ENCODE measurements at regions of chr5 and their contacts with region 1.

Region 1: GRCh38 chr5:139262742-139263445 is 30.6 kb upstream of the MATR3 start:
- DNase-seq: peak; percentile 94
- H3K4me3 ChIP-seq: no peak overlapping the region
- H3K27ac ChIP-seq: no peak overlapping the region
- H3K4me1 ChIP-seq: no peaks in the 10 kb centered on the region
- H3K27me3 ChIP-seq: no peaks in the 10 kb centered on the region
- CTCF ChIP-seq: peak; percentile 92

Region 2: DNA sequence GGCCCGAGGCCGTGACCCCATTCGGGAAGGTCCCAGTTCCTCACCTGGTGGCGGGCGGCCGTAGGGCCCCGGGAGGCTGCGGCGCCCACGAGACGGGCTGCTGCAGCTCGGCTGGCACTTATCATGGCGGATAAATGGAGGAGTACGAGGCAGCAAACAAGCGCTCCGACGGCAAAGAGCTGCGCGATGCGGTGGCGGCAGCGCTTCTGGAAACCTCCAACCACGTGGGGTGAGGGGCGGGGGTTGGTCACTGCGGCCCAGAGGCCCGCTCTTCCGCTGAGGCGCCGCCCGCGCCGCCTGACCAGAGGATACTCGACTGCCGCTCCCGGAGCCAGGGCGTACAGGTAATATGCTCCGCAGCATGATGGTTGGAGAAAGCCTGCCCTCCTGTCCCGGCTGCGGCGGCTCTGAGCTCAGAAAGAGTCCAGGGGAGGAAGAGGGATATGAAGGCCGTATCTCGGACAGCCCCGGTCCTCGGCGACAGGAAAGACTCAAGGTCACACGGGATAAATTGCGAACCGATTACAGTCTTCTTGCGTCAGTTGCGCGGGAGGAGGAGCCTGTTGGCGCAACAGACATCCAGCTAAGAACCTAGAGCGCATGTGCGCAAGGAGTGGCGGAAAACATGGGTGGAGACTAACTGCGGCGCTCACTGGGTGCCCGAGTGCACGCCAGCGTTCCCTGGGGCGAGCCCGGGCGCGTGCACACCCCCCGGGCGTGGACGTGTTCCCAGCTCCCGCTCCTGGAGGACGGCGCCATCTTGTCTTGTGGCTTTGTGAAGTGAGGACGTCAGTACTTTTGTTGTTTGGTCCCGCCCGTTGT is 687.5 kb before region 1 on chr5 and contains the start of gene HSPA9:
- CTCF ChIA-PET with region 1: interaction called, 11 read pairs
- POLR2A ChIA-PET with region 1: no interaction called
- intact Hi-C with region 1: loop called (anchors 1 kb)
- DNase-seq: peak; percentile 99
- H3K4me3 ChIP-seq: peak within 1 kb of the TSS; percentile 84
- H3K27ac ChIP-seq: peak within 1 kb of the TSS; percentile 100
- H3K4me1 ChIP-seq: peaks cover 17% of the 10 kb centered on the region
- H3K27me3 ChIP-seq: no peaks in the 10 kb centered on the region
- CTCF ChIP-seq: no peak
- total RNA-seq, gene HSPA9: 502 TPM in 2 replicates

Region 3: DNA sequence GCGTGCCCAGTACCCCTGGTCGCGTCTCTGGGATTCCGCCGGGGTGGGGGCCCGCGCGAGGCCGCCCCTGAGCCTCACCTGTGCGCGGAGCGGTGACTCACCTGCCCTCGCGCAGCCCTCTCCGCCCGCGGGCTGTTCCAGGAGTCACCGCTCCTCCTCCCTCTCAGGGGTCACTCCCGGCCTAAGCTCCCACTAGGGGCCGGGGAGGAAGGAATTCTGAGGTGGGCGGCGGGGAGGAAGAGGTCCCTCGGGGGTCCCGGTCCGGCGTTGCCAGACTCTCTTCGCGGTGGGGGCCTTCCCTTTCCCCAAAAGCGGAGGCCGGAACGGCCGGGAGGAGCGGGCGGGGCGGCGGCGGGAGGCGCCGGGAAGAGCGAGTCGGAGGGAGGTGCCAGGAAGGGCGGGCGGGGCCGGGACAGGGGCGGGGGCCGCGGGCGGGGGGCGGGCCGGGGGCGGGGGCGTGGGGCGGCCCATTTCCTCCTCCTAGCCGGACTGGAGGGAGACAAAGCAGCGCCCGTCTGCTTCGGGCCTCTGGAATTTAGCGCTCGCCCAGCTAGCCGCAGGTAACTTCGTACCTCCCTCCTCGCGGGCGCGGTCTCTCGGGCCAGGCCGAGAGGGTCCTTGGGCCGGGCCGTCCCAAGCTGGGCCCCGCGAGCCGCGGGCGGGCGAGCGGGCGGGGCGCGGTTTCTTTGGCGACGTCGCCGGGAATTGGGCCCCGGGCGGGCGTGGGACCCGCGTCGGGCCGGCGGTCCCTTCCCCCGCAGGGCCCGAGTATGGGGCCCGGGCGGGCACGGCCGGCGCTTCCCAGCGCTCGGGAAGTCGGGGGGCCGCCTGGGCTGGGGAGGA is 509.7 kb before region 1 on chr5 and contains the start of gene CTNNA1:
- CTCF ChIA-PET with region 1: interaction called, 5 read pairs
- POLR2A ChIA-PET with region 1: no interaction called
- intact Hi-C with region 1: loop called (anchors 5 kb)
- DNase-seq: peak; percentile 69
- H3K4me3 ChIP-seq: peak within 1 kb of the TSS; percentile 100
- H3K27ac ChIP-seq: peak within 1 kb of the TSS; percentile 94
- H3K4me1 ChIP-seq: peaks cover 15% of the 10 kb centered on the region
- H3K27me3 ChIP-seq: no peaks in the 10 kb centered on the region
- CTCF ChIP-seq: no peak
- total RNA-seq, gene CTNNA1: 249 and 250 TPM in 2 replicates

Region 4: GRCh38 chr5:138953387-138954256 is 309.3 kb before region 1 on chr5:
- CTCF ChIA-PET with region 1: no interaction called
- POLR2A ChIA-PET with region 1: no interaction called
- intact Hi-C with region 1: loop called (anchors 5 kb)
- DNase-seq: peak; percentile 94
- H3K4me3 ChIP-seq: no peak overlapping the region
- H3K27ac ChIP-seq: peak overlapping the region; percentile 70
- H3K4me1 ChIP-seq: peaks cover 27% of the 10 kb centered on the region
- H3K27me3 ChIP-seq: no peaks in the 10 kb centered on the region
- CTCF ChIP-seq: no peak

Region 5: GRCh38 chr5:139181835-139182452 is 81.0 kb before region 1 on chr5:
- CTCF ChIA-PET with region 1: no interaction called
- POLR2A ChIA-PET with region 1: no interaction called
- intact Hi-C with region 1: loop called (anchors 1 kb)
- DNase-seq: peak; percentile 41
- H3K4me3 ChIP-seq: no peak overlapping the region
- H3K27ac ChIP-seq: peak overlapping the region; percentile 62
- H3K4me1 ChIP-seq: peaks cover 58% of the 10 kb centered on the region
- H3K27me3 ChIP-seq: no peaks in the 10 kb centered on the region
- CTCF ChIP-seq: no peak

Region 6: DNA sequence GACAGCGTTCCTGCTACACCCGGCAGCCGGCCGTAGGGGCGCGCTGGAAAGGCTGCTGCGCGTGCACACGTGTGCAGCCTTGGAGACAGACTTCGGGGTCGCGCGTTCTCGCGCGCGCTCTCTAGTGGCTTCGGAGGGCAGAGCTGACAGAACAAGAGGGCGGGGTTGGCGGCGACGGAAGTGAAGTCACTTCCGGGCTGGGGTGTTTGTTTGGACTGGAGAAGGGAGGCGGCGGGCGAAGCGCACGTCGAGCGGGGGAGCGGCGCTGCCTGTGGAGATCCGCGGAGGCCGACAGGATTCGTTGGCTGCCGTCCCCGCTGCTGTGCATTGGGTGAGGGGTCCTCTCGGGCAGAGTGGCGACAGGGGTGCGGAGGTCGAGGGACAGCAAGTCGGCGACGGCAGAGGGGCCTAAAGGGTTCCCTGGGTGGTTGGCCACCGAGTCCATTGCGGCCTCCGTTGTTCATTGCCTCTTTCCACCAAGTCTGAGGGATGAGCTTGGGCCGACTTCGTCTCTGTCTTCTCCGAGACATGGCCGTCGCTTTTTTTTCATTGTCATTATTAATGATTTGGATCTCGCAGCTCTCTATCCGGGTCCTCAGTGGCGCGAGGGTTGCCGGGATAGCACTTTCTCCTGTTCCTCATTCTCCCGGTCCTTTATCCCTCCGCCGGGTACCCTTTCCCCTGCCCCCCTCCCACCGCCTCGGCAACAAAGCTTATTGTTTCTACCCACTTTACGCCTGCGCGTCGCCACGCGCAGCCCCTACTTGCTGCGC is 78.9 kb after region 1 on chr5 and contains the start of gene PAIP2:
- CTCF ChIA-PET with region 1: no interaction called
- POLR2A ChIA-PET with region 1: no interaction called
- intact Hi-C with region 1: no loop called
- DNase-seq: peak; percentile 99
- H3K4me3 ChIP-seq: peak within 1 kb of the TSS; percentile 74
- H3K27ac ChIP-seq: peak within 1 kb of the TSS; percentile 99
- H3K4me1 ChIP-seq: peaks cover 12% of the 10 kb centered on the region
- H3K27me3 ChIP-seq: no peaks in the 10 kb centered on the region
- CTCF ChIP-seq: peak; percentile 87
- total RNA-seq, gene PAIP2: 95.0 and 108 TPM in 2 replicates

Region 7: GRCh38 chr5:139711067-139711905 is 448.4 kb after region 1 on chr5:
- CTCF ChIA-PET with region 1: no interaction called
- POLR2A ChIA-PET with region 1: no interaction called
- intact Hi-C with region 1: no loop called
- DNase-seq: peak; percentile 95
- H3K4me3 ChIP-seq: peak overlapping the region; percentile 53
- H3K27ac ChIP-seq: peak overlapping the region; percentile 85
- H3K4me1 ChIP-seq: peaks cover 39% of the 10 kb centered on the region
- H3K27me3 ChIP-seq: no peaks in the 10 kb centered on the region
- CTCF ChIP-seq: peak; percentile 29; the same call in 1 of the 2 replicates